HCT116 (cell line): ENCODE measurements at regions of chr15 and their contacts with region 1.

Region 1: GRCh38 chr15:75201609-75202250 is at the start of gene C15orf39:
- DNase-seq: peak; percentile 33
- ATAC-seq: peak; percentile 69
- H3K4me3 ChIP-seq: peak within 1 kb of the TSS; percentile 88
- H3K27ac ChIP-seq: peak within 1 kb of the TSS; percentile 95
- H3K4me1 ChIP-seq: peaks cover 32 to 56% of the 10 kb centered on the region in 2 experiments
- H3K27me3 ChIP-seq: no peaks in the 10 kb centered on the region
- CTCF ChIP-seq: peak in 2 of 3 experiments; percentile 70 to 73; a peak in 4 of 6 replicates
- POLR2A ChIP-seq: peak; percentile 93
- RAD21 ChIP-seq: no peak
- total RNA-seq, gene C15orf39: 29.3 TPM

Region 2: DNA sequence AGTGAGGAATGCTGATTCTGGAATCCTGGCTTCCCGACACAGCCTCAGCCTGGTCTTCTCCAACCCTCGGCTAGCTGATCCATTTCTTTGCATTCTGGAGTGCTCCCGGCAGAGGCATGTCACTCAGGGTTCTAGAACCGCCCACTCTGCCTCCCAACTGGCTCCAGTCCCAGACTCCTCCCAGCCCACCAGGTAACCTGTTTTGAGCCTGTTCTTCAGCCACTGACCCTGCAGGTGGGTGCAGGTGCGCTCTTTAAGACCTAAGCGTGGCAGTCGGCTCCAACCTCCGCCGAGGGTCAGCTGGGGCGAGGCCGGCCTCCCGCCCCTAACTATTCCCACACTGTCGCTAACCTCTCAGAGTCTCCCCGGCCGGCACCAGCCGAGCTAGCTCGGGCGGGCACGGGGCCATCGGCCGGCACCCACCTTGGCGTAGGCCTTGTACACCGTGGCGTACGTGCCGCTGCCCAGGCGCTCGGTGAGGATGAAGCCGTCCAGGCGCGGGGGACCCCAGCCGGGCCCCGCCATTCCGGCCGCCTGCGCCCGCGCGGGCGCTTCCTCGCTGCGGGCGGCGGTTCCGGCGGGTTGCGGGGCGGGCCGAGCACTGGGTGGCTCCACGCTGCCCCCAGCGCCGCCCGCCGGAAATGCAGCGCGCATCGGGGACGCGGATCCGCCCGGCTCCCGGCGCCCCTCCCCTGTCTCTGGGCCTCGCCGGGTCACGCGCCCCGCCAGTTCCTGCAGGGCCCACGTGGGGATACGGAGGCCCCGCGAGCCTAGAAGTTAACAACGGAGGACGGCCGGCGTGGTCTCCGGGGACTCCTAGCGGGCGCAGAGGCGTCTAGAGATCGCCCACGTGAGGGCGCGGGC is 358.9 kb before region 1 on chr15 and contains the start of gene ULK3:
- CTCF ChIA-PET with region 1: no interaction called
- POLR2A ChIA-PET with region 1: interaction called, 10 read pairs
- RAD21 ChIA-PET with region 1: no interaction called
- intact Hi-C with region 1: no loop called
- DNase-seq: peak; percentile 61
- ATAC-seq: peak; percentile 91
- H3K4me3 ChIP-seq: peak within 1 kb of the TSS; percentile 53 to 78
- H3K27ac ChIP-seq: peak within 1 kb of the TSS; percentile 93
- H3K4me1 ChIP-seq: peaks cover 9 to 21% of the 10 kb centered on the region in 2 experiments; a peak in 3 of 4 replicates
- H3K27me3 ChIP-seq: no peaks in the 10 kb centered on the region
- CTCF ChIP-seq: peak in 2 of 3 experiments; percentile 18 to 45; a peak in 2 of 6 replicates
- POLR2A ChIP-seq: peak; percentile 55
- RAD21 ChIP-seq: peak; percentile 41; the same call in 1 of the 2 replicates
- total RNA-seq, gene ULK3: 48.4 TPM

Region 3: DNA sequence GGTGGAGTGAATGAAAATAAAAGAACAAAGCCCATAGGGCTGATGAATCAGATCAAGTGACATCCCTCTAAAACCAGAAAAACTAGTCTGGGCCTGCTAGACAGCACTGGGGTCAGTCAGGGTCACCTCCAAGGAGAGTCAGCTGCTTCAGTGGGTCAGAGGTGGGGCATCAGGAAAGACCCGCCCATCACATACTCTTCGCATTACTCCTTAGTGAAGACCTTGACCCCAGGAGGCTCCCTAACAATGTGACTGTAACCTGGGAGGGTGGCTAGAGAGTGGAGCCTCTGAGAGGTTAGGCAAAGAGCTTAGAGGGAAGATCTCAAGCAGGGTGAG is 165.4 kb before region 1 on chr15:
- CTCF ChIA-PET with region 1: interaction called, 35 read pairs
- POLR2A ChIA-PET with region 1: interaction called, 24 read pairs
- RAD21 ChIA-PET with region 1: interaction called in 1 of 2 experiments, 10 read pairs
- intact Hi-C with region 1: no loop called
- DNase-seq: peak; percentile 72
- ATAC-seq: peak; percentile 74
- H3K4me3 ChIP-seq: peak overlapping the region in 1 of 2 experiments; percentile 20; a peak in 1 of 4 replicates
- H3K27ac ChIP-seq: 0 out of 2 replicates have a peak overlapping the region, but pooled peaks have one; percentile 13
- H3K4me1 ChIP-seq: peaks cover 41 to 45% of the 10 kb centered on the region in 2 experiments
- H3K27me3 ChIP-seq: no peaks in the 10 kb centered on the region
- CTCF ChIP-seq: no peak
- POLR2A ChIP-seq: no peak
- RAD21 ChIP-seq: no peak

Region 4: DNA sequence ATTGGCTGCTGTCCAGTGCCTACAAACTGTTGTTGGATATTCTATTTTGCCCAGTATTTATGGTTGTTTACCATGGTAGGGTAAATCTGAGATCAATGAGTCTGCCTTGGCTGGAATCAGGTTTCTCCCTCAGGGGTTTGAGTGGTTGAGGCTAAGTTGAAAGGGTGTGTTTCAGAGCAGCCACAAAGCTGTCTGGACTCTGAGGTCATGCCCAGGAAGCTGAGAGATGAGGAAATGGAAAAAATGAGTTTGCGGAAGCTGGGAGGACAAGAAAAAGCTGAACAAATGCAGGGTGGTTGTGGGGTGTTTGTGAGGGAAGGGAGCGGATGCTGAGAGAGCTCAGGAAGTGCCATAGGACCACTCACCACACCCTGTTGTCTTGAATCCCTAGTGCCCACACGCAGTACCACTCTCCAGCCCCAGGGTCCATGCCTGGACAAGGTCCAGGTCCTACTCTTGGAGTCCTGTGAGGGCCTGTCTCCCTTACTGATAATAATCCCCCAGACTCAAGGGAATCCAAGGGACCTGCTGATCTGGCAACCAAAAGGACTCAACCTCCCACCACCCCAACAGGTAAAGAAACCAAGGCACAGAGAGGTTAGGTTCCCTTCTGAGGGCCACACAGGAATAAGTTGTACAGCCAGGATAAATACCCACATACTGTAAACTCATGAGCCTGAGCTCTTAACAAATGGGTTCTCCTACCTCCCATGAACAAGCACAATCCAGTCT is 96.8 kb before region 1 on chr15:
- CTCF ChIA-PET with region 1: interaction called, 3 read pairs
- POLR2A ChIA-PET with region 1: interaction called, 3 read pairs
- RAD21 ChIA-PET with region 1: interaction called, 3 to 4 read pairs
- intact Hi-C with region 1: loop called (anchors 5 kb)
- DNase-seq: peak; percentile 88
- ATAC-seq: peak; percentile 67
- H3K4me3 ChIP-seq: peak overlapping the region in 1 of 2 experiments; percentile 9; a peak in 1 of 4 replicates
- H3K27ac ChIP-seq: peak overlapping the region; percentile 36
- H3K4me1 ChIP-seq: peaks cover 53 to 57% of the 10 kb centered on the region in 2 experiments
- H3K27me3 ChIP-seq: no peaks in the 10 kb centered on the region
- CTCF ChIP-seq: no peak; a peak in 1 of 6 replicates
- POLR2A ChIP-seq: no peak
- RAD21 ChIP-seq: no peak

Region 5: GRCh38 chr15:75185271-75186029 is 16.3 kb before region 1 on chr15:
- CTCF ChIA-PET with region 1: no interaction called
- POLR2A ChIA-PET with region 1: no interaction called
- RAD21 ChIA-PET with region 1: no interaction called
- intact Hi-C with region 1: no loop called
- DNase-seq: no peak
- ATAC-seq: no peak
- H3K4me3 ChIP-seq: no peak overlapping the region
- H3K27ac ChIP-seq: no peak overlapping the region
- H3K4me1 ChIP-seq: no peaks in the 10 kb centered on the region
- H3K27me3 ChIP-seq: no peaks in the 10 kb centered on the region
- CTCF ChIP-seq: no peak
- POLR2A ChIP-seq: no peak
- RAD21 ChIP-seq: no peak

Region 6: DNA sequence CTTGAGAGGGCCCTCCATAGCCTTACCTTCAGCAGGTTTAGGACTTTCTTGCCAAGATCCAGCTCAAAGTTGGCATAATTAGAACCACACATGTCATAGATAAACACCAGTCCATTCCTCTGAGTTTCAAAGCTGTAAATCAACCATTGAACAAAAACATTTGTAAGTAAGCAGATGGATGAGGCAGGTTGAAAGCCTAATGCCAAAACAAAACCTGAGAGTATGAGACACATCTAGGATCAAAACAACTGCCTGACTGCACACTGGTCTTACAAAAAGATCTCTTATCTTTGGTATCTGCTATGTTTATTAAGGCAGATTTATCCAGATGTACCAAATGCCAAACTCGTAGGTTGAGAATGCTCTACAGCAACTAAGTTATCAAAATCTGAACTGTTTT is 315.5 kb after region 1 on chr15:
- CTCF ChIA-PET with region 1: no interaction called
- POLR2A ChIA-PET with region 1: no interaction called
- RAD21 ChIA-PET with region 1: no interaction called
- intact Hi-C with region 1: no loop called
- DNase-seq: no peak
- ATAC-seq: no peak
- H3K4me3 ChIP-seq: no peak overlapping the region
- H3K27ac ChIP-seq: peak overlapping the region; percentile 34; the same call in 1 of the 2 replicates
- H3K4me1 ChIP-seq: peaks cover 9 to 27% of the 10 kb centered on the region in 2 experiments
- H3K27me3 ChIP-seq: no peaks in the 10 kb centered on the region
- CTCF ChIP-seq: no peak
- POLR2A ChIP-seq: no peak
- RAD21 ChIP-seq: no peak

Region 7: DNA sequence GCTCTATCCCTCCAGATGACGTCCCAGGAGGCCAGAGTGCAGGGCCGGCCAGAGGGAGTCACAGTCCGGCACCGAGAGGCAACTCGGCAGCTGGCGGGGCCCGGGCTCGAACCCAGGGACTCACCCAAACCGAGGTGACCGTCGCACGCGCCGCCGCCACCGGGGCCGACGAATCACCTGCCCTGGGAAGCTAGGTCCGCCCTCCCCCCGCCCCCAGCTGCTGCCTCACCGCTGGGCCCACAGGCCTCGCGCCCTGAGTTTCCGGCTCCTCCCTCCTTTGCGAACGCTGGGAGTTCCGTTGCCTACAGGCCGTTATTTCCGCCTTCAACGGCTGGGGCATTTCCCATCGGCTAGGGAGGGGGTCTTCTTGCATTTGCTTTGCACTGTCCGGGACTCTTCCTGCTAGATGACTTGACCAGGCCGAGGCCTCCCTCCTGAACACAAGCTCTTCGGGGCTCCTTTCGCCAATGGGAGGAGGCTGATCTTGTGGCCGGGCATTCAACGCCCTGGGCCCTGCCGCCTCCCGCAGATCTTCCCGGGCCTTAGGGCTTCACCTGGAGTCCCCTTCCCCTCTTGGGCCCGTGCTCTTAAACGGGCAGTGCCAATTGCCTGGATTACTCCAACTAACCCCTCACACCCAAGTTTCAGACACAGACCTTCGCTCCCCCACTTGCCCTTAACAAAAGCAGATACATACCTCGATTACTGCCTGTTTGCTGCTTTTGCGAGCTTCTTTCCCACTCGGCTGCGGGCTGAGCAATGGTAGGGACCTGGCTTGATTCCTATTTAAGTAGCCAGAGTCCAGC is 424.0 kb after region 1 on chr15 and contains the start of gene SNUPN:
- CTCF ChIA-PET with region 1: no interaction called
- POLR2A ChIA-PET with region 1: no interaction called
- RAD21 ChIA-PET with region 1: no interaction called
- intact Hi-C with region 1: no loop called
- DNase-seq: peak; percentile 90
- ATAC-seq: peak; percentile 83
- H3K4me3 ChIP-seq: peak within 1 kb of the TSS; percentile 91 to 99
- H3K27ac ChIP-seq: peak within 1 kb of the TSS; percentile 99
- H3K4me1 ChIP-seq: peaks cover 16 to 40% of the 10 kb centered on the region in 2 experiments
- H3K27me3 ChIP-seq: no peaks in the 10 kb centered on the region
- CTCF ChIP-seq: no peak
- POLR2A ChIP-seq: peak; percentile 87
- RAD21 ChIP-seq: no peak
- total RNA-seq, gene SNUPN: 29.8 TPM